A549 (cell line): ENCODE measurements at regions of chr1 and their contacts with region 1.

Region 1: DNA sequence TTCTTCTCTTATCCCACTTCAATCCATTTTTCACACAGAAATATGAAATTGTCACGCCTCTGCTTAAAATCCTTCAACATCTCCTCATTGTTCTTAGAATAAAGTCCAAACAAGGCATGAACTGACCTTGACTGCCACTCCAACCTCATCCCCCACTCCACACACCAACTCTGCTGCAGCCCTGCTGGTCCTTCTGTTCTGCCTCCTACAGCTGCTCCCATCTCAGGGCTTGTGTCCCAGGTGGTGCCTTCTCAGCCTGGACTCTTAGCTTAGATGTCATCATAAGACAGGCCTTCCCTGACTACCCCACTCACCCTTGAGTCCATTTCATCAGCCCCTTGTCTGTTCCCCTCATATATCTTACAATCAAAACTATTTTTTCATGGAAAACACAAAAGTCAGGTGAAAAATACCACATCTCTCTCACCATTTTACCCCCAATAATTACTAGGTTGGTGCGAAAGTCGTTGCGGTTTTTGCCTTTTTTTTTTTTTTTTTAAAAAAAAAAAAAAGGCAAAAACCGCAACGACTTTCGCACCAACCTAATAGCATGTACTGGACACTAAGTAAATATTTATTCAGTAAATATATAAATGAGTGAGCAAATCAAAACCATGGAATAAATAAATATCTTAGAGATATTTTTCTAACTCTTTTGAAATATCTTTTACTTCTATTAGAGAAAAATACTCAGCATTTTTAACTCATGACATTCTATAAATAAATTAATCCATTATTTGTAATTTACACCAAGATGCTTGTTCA is 10.2 kb downstream of the TARBP1 start:
- DNase-seq: no peak
- ATAC-seq: no peak
- H3K4me3 ChIP-seq: no peak overlapping the region
- H3K27ac ChIP-seq: no peak overlapping the region
- H3K4me1 ChIP-seq: 0 out of 3 replicates have a peak, but pooled peaks cover 2% of the 10 kb centered on the region
- CTCF ChIP-seq: no peak
- EP300 ChIP-seq: no peak
- POLR2A ChIP-seq: no peak
- RAD21 ChIP-seq: no peak

Region 2: GRCh38 chr1:234486498-234487448 is 18.0 kb after region 1 on chr1:
- CTCF ChIA-PET with region 1: interaction called, 11 read pairs
- POLR2A ChIA-PET with region 1: no interaction called
- DNase-seq: peak; percentile 59 to 69
- ATAC-seq: peak; percentile 84 to 86; a peak in 5 of 6 replicates
- H3K4me3 ChIP-seq: no peak overlapping the region
- H3K27ac ChIP-seq: peak overlapping the region in 1 of 2 experiments; percentile 36; a peak in 2 of 6 replicates
- H3K4me1 ChIP-seq: peaks cover 5% of the 10 kb centered on the region; the same call in 1 of the 3 replicates
- CTCF ChIP-seq: peak; percentile 75
- EP300 ChIP-seq: no peak
- POLR2A ChIP-seq: no peak
- RAD21 ChIP-seq: peak; percentile 87 to 91